ENCODE measurements at regions of chr11 and their contacts with region 1.

Region 1: DNA sequence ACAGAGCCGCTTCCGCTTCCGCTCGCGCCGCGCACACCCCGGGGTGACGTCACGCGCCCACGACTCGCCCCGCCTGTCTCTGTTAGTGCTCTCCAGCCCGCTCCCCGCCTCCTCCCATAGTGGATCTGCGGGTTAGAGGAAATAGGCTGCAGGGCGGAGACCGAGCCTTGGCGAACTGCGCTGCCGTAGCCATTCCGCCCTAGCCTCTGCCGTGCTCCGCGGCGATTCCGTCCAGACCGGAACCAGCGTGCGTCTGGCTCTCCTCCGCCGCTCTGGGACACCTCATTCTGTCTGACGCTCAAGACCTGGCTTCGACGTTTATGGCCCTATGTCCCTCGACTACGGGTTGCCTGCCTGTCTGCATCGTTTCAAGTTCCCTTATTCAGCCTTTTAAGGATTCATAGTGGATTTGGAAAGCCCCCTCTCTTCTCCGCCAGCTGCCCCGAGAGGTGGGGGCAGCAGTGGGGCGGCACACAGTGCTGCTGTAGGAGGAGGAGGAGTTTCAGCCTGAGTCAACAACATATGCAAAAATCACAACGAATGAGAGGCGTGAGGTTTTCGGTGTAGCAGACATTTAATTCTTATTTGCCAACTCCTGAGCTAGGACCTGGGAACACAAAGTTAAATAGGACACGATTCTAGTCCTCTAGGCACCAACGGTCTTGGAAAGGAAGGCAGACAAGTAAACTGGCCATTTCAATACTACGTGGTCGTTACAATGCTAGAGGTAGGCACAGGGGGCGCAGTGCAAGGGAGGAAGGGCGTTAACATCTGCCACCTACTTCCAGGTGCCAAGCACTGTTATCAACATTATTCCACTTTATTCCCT is at the start of gene TAF10:
- DNase-seq: peak; percentile 95 to 96
- ATAC-seq: peak; percentile 91 to 94
- H3K4me3 ChIP-seq: peak within 1 kb of the TSS; percentile 72 to 85 (median 78)
- H3K27ac ChIP-seq: peak within 1 kb of the TSS; percentile 92 to 100 (median 99)
- H3K4me1 ChIP-seq: peaks cover 18 to 20% of the 10 kb centered on the region in 2 donors
- H3K27me3 ChIP-seq: no peaks in the 10 kb centered on the region
- CTCF ChIP-seq: peak in 4 of 5 experiments; percentile 15 to 62 (median 37)
- POLR2A ChIP-seq: peak; percentile 92 to 94
- total RNA-seq, gene TAF10: 49.8 to 77.8 (median 65.7) TPM

Region 2: DNA sequence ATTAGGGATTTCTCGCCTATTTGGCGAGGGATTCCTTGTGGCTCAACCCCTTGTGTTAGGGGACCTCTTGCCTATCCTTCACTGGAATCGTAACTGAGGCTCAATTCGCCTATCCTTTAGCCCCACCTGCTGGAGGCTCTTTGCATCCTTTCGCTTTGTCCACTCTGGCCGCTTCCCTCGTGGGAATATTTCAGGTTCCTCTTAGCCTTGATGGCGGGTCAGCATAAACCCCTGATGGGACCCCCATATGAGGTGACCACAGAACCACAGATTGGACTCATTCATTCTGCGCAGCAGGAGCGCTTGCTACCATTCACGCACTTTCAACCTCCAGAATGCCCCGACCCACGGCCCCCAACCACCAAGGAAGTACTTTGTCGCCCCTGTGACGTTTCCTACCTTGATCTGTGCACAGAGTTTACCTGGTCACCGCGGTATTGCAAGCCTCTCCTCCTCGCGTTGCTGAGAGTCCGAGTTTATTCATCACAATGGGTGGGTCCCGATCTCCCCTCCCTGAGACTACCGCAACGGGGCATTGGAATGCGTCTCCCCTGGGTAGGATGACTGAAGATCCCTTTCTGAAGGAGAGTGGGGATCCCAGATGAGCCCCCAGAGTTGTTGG is 803.8 kb before region 1 on chr11 and contains the start of gene OR52N2:
- in situ Hi-C with region 1: no loop called
- intact Hi-C with region 1: no loop called
- DNase-seq: peak; percentile 46 to 48
- ATAC-seq: peak; percentile 47 to 76
- H3K4me3 ChIP-seq: peak within 1 kb of the TSS; percentile 26 to 68 (median 58)
- H3K27ac ChIP-seq: peak within 1 kb of the TSS in 1 of 4 donors; percentile 22
- H3K4me1 ChIP-seq: no peaks in the 10 kb centered on the region
- H3K27me3 ChIP-seq: no peaks in the 10 kb centered on the region
- CTCF ChIP-seq: peak; percentile 48 to 83 (median 69)
- POLR2A ChIP-seq: no peak
- total RNA-seq, gene OR52N2: not detected

Region 3: DNA sequence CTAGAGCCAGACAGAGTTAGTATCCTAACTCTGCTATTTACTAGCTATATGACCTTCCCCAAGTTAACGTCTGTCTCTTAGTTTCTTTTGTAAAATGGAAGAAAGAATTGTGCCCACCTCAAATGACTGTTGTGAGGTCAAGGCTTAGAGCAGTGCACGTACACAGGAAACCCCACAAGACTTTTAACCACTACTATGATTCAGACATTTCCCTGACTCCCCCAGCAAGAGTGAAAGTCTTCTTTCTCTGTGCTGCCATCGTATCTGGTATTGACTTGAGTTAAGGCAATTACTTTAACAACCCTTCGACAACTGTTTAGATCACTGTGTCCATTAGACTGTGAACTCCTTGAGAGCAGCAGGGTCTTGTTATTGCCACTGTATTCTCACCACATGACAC is 416.0 kb before region 1 on chr11:
- in situ Hi-C with region 1: no loop called
- intact Hi-C with region 1: no loop called
- DNase-seq: no peak
- ATAC-seq: no peak
- H3K4me3 ChIP-seq: no peak overlapping the region
- H3K27ac ChIP-seq: no peak overlapping the region
- H3K4me1 ChIP-seq: no peaks in the 10 kb centered on the region
- H3K27me3 ChIP-seq: no peaks in the 10 kb centered on the region
- CTCF ChIP-seq: no peak
- POLR2A ChIP-seq: no peak

Region 4: DNA sequence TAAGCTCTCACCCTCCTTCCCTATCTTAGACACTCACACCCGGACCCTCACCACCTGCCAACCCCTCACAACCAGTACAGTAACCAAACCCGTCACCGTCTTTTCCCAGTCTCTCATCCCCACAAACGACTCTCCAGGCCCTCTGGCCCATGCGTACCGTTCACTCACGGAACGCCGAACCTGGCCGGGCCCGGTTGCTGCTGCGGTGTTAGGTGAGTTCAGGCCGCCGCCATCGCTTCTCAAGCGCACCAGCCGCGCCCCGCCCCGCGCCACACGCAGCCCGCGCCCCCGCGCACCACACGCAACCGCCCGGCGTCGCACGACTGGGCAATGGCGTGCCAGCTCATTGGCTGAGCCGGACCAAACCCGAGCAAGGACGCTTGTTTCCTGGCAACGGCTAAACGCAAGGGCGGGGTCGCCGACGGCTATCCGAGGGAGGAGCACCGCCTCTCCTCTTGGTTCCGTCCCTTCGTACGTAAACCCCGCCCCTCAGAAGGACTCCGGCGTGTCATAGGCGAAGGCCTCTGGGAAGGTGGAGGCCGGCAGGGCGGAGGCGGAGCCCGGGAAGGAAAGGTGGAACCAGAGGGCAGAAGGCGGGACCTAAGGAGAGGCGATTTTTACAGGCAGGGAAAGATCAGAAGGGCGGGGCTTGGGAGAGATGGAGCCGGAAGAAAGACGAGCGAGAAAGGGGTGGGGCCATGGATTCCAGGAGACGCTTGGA is 377.9 kb before region 1 on chr11 and contains the start of gene FHIP1B:
- in situ Hi-C with region 1: loop called in 1 of 4 experiments (anchors 10 kb)
- intact Hi-C with region 1: loop called (anchors 10 kb)
- DNase-seq: peak; percentile 100
- ATAC-seq: peak; percentile 96 to 98
- H3K4me3 ChIP-seq: peak within 1 kb of the TSS; percentile 73 to 79 (median 76)
- H3K27ac ChIP-seq: peak within 1 kb of the TSS; percentile 81 to 88 (median 86)
- H3K4me1 ChIP-seq: peaks cover 14 to 24% of the 10 kb centered on the region in 2 donors
- H3K27me3 ChIP-seq: no peaks in the 10 kb centered on the region
- CTCF ChIP-seq: no peak
- POLR2A ChIP-seq: peak; percentile 47 to 60
- total RNA-seq, gene FHIP1B: 23.9 to 41.7 (median 33.9) TPM

Region 5: GRCh38 chr11:6452219-6452618 is 160.2 kb before region 1 on chr11:
- in situ Hi-C with region 1: no loop called
- intact Hi-C with region 1: no loop called
- DNase-seq: no peak
- ATAC-seq: no peak
- H3K4me3 ChIP-seq: no peak overlapping the region
- H3K27ac ChIP-seq: no peak overlapping the region
- H3K4me1 ChIP-seq: peaks cover 0 to 2% of the 10 kb centered on the region in 2 donors
- H3K27me3 ChIP-seq: no peaks in the 10 kb centered on the region
- CTCF ChIP-seq: no peak
- POLR2A ChIP-seq: no peak